PC-3 (cell line): ENCODE measurements at regions of chr13 and their contacts with region 1.

Region 1: GRCh38 chr13:103188713-103189326 is 122.6 kb upstream of the SLC10A2 start:
- DNase-seq: peak; percentile 48
- ATAC-seq: peak; percentile 24; the same call in 1 of the 2 replicates
- H3K4me3 ChIP-seq: no peak overlapping the region
- H3K27ac ChIP-seq: 0 out of 2 replicates have a peak overlapping the region, but pooled peaks have one; percentile 11
- H3K4me1 ChIP-seq: no peaks in the 10 kb centered on the region
- H3K27me3 ChIP-seq: no peaks in the 10 kb centered on the region
- CTCF ChIP-seq: peak; percentile 72

Region 2: GRCh38 chr13:103351035-103351828 is 162.4 kb after region 1 on chr13:
- CTCF ChIA-PET with region 1: no interaction called
- POLR2A ChIA-PET with region 1: no interaction called
- intact Hi-C with region 1: loop called (anchors 10 kb)
- DNase-seq: peak; percentile 59
- ATAC-seq: peak; percentile 93
- H3K4me3 ChIP-seq: no peak overlapping the region; the same call in 1 of the 2 replicates
- H3K27ac ChIP-seq: no peak overlapping the region
- H3K4me1 ChIP-seq: no peaks in the 10 kb centered on the region
- H3K27me3 ChIP-seq: no peaks in the 10 kb centered on the region
- CTCF ChIP-seq: no peak

Region 3: GRCh38 chr13:103703246-103703645 is 514.4 kb after region 1 on chr13:
- CTCF ChIA-PET with region 1: no interaction called
- POLR2A ChIA-PET with region 1: no interaction called
- intact Hi-C with region 1: loop called (anchors 5 kb)
- DNase-seq: no peak
- ATAC-seq: no peak
- H3K4me3 ChIP-seq: no peak overlapping the region
- H3K27ac ChIP-seq: no peak overlapping the region
- H3K4me1 ChIP-seq: no peaks in the 10 kb centered on the region
- H3K27me3 ChIP-seq: no peaks in the 10 kb centered on the region
- CTCF ChIP-seq: no peak

Region 4: DNA sequence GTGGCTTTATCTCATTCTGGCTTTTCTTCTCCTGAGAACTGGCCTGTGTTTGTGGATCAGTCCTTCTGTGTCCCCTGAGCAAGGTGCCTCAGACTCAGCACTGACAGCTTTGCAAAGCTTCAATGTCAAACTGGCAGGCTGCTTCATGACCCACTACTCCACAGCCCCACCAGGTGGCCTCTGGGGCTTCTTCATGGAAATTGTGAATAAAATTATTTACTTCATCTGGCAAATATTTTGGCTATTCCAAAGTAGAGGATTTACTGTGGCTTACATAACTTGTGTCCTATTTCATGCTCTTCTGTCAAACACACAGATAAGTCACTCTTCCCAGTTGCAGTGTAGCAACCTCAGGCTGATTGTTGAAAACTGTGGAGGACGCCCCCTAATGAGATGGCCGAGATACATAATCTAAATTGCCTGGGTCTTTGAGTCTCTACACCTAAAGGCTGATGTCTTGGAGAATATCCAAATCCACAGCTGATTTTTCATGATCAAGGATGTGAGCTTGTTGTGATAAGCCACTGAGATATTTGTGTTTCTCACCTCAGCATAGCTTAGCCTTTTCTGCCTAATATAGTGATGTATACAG is 599.3 kb after region 1 on chr13:
- CTCF ChIA-PET with region 1: no interaction called
- POLR2A ChIA-PET with region 1: no interaction called
- intact Hi-C with region 1: loop called (anchors 2 kb)
- DNase-seq: peak; percentile 10
- ATAC-seq: no peak
- H3K4me3 ChIP-seq: no peak overlapping the region
- H3K27ac ChIP-seq: no peak overlapping the region
- H3K4me1 ChIP-seq: no peaks in the 10 kb centered on the region
- H3K27me3 ChIP-seq: no peaks in the 10 kb centered on the region
- CTCF ChIP-seq: peak; percentile 52

Region 5: DNA sequence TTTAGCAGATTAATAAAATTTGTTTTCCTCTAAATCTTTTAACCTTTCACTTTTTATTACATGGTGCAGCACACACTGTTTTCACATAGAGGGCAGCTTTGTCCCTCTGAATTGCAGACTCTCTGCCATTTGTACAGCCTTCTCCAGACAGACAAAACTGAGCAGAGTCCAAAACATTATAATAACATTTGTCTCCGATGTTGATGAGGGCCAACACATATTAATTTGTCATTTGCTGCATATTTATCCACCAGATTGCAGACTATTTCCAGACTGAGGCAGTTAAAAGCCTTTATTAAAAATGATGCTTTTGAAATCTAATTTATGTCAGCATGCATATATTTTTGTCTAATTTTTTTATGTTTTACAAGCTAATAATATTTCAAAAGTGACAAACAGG is 1129.3 kb after region 1 on chr13:
- CTCF ChIA-PET with region 1: no interaction called
- POLR2A ChIA-PET with region 1: no interaction called
- intact Hi-C with region 1: loop called (anchors 10 kb)
- DNase-seq: peak; percentile 38
- ATAC-seq: peak; percentile 55
- H3K4me3 ChIP-seq: no peak overlapping the region
- H3K27ac ChIP-seq: no peak overlapping the region
- H3K4me1 ChIP-seq: peaks cover 25% of the 10 kb centered on the region
- H3K27me3 ChIP-seq: no peaks in the 10 kb centered on the region
- CTCF ChIP-seq: peak; percentile 69